HCT116 (cell line): ENCODE measurements at regions of chr4 and their contacts with region 1.

Region 1: DNA sequence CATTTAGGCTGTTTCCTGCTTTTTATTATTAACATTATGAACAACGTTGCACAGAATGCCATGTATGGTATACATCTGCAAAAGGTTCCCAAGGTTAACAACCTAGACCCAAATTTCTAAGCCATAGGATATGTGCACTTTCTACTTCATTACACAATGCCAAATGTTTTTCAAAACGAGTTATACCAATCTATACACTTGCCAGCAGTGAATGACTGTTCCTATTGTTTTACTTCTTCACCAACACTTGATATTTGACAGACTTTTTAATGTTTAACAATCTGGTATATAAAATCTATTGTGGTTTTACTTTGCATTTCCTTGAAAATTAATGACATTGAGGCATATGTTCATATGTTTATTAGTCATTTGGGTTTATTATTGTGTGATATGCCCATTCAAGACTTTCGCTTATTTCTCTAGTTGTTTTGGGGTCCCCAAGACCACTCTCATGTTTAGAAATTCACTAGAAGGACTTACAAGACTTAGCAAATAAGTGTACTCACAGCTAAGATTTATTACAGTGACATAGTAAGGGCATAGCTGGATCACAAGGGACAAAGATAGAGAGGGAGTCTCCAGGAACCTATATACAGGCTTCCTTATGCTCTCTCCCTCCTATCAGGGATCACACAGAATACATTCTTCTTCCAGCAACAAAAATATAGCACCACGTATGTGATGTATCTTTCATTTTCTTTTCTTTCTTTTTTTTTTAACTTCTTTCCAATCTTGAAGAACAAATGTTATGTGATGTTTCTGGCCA is 62.5 kb downstream of the TBCK start:
- DNase-seq: no peak
- ATAC-seq: no peak
- H3K4me3 ChIP-seq: no peak overlapping the region
- H3K27ac ChIP-seq: no peak overlapping the region
- H3K4me1 ChIP-seq: no peaks in the 10 kb centered on the region
- H3K27me3 ChIP-seq: no peaks in the 10 kb centered on the region
- CTCF ChIP-seq: no peak
- POLR2A ChIP-seq: no peak
- RAD21 ChIP-seq: no peak

Region 2: GRCh38 chr4:106315476-106315967 is 62.0 kb after region 1 on chr4:
- CTCF ChIA-PET with region 1: no interaction called
- POLR2A ChIA-PET with region 1: no interaction called
- RAD21 ChIA-PET with region 1: no interaction called
- intact Hi-C with region 1: no loop called
- DNase-seq: no peak
- ATAC-seq: peak; percentile 51
- H3K4me3 ChIP-seq: peak overlapping the region; percentile 84 to 88
- H3K27ac ChIP-seq: peak overlapping the region; percentile 74
- H3K4me1 ChIP-seq: peaks cover 5 to 13% of the 10 kb centered on the region in 2 experiments; a peak in 3 of 4 replicates
- H3K27me3 ChIP-seq: no peaks in the 10 kb centered on the region
- CTCF ChIP-seq: no peak
- POLR2A ChIP-seq: no peak
- RAD21 ChIP-seq: no peak

Region 3: DNA sequence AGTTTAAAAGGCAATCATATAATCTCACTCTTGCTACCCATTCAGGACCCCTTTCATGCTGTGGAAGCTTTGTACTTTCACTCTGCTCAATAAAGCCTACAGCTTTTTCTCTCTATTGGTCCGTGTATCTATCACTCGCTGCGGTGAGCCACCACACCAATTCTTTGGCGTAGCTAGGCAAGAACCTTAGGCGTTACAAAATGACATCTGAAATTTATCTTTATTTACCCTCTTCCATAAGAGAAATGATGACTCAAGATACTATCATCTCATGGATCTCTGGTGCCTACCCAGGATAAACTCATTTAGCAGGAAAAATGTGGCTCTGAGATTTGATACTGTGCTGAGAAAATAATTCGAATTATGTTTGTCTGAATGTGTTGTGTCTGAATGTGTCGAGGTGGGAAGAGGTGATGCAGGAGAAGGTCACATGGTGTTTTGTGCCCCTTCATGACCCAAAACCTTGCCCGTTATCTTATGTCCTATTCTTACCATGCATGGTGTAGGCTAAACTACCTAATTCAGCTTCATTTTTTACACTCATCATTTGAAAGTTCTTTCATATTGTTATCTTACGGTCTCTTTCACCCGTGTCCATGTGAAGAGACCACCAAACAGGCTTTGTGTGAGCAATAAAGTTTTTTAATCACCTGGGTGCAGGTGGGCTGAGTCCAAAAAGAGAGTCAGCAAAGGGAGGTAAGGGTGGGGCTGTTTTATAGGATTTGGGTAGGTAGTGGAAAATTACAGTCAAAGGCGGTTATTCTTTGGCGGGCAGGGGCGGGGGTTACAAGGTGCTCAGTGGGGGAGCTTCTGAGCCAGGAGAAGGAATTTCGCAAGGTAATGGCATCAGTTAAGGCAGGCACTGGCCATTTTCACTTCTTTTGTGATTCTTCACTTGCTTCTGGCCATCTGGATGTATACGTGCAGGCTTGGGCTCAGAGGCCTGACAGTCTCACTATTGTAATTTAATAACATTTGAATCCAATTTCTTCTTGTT is 156.6 kb after region 1 on chr4:
- CTCF ChIA-PET with region 1: no interaction called
- POLR2A ChIA-PET with region 1: no interaction called
- RAD21 ChIA-PET with region 1: no interaction called
- intact Hi-C with region 1: no loop called
- DNase-seq: no peak
- ATAC-seq: no peak
- H3K4me3 ChIP-seq: no peak overlapping the region
- H3K27ac ChIP-seq: no peak overlapping the region
- H3K4me1 ChIP-seq: peaks cover 0 to 6% of the 10 kb centered on the region in 2 experiments; a peak in 1 of 4 replicates
- H3K27me3 ChIP-seq: no peaks in the 10 kb centered on the region
- CTCF ChIP-seq: no peak
- POLR2A ChIP-seq: no peak
- RAD21 ChIP-seq: no peak

Region 4: DNA sequence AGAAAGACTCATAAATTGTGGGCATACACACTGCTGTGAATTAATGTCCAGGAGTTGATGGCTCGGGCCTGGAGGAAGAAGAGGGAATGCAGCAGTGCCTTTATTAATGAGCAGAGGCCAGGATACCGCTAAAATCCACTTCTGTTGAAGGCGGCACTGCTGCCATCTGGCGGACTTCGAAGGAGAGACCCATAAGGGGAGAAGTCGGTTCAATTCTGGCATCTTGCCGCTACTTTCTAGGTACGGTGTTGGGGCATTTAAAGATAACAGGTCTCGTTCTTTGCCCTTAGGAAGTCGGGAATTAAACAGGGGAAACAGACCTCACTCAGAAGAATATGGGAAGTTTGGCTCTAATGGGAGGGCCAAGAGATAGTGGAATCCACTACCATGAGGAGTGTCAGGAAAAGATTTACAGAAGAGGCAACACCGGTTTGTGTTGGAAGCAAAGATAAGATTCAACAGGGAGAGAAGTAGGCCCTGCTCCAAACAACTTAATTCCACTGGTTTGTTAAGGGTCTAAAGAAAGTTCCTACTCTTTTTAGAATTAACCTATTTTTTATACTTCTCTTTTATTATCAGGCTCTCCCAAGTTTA is 248.7 kb after region 1 on chr4:
- CTCF ChIA-PET with region 1: no interaction called
- POLR2A ChIA-PET with region 1: no interaction called
- RAD21 ChIA-PET with region 1: no interaction called
- intact Hi-C with region 1: loop called (anchors 5 kb)
- DNase-seq: peak; percentile 54
- ATAC-seq: peak; percentile 97
- H3K4me3 ChIP-seq: peak overlapping the region in 1 of 2 experiments; percentile 17; a peak in 1 of 4 replicates
- H3K27ac ChIP-seq: no peak overlapping the region
- H3K4me1 ChIP-seq: peaks cover 0 to 2% of the 10 kb centered on the region in 2 experiments; a peak in 1 of 4 replicates
- H3K27me3 ChIP-seq: no peaks in the 10 kb centered on the region
- CTCF ChIP-seq: peak; percentile 74 to 83 (median 81)
- POLR2A ChIP-seq: no peak
- RAD21 ChIP-seq: peak; percentile 83